ENCODE measurements at regions of chr5 and their contacts with region 1.

Region 1: DNA sequence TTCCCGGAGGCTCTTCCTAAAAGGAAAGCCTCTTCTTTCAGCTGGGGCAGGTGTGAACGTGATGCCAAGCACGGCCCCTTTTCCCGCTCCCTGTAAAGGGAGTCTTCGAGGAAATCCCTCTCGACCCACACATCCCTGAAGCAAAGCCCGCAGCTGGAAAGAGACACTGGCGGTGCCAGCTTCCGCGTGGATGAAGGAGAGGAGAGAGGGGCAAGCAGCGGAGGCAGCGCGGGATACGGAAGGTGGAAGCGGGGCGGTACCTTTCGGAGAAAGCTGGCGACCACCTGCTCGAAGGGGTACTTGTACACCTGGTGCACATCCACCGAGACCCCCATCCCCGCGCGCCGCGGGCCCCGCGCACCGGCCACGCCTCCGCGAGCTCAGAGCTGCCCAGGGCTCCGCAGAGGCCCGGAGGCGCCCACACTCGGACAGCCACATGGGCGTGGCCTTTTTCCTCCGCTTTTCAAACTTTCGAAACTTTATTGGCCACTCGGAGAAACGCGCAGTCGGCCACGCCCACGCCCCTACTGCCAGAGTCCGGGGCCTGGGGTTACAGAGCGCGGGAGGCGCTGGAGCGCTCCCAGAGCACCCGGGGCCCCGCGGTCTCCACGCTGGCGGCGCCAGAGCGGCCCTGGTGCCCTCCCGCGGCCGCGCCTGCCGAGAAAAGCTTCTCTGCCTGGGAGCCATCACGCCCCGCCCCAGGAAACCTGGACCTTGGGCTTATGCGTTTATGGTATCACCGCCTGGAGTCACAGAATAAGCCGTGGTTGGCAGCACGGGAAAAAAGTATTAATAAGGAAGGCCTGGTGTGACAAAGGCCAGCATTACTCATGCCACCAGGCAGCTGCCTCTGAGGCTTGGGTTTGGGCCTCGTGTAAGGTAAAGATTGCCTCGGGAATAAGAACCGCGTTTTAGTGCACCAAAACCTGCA is at the start of gene PRELID2:
- DNase-seq: peak; percentile 89
- ATAC-seq: peak; percentile 98
- H3K4me3 ChIP-seq: peak within 1 kb of the TSS; percentile 72 to 77 (median 74)
- H3K27ac ChIP-seq: peak within 1 kb of the TSS; percentile 79
- H3K4me1 ChIP-seq: peaks cover 67% of the 10 kb centered on the region
- H3K27me3 ChIP-seq: no peaks in the 10 kb centered on the region; a peak in 1 of 5 replicates
- CTCF ChIP-seq: peak; percentile 65
- EP300 ChIP-seq: no peak
- POLR2A ChIP-seq: peak; percentile 74 to 89
- RAD21 ChIP-seq: peak; percentile 77
- total RNA-seq, gene PRELID2: 20.3 and 22.9 TPM in 2 replicates

Region 2: GRCh38 chr5:145797336-145797735 is 37.8 kb before region 1 on chr5:
- CTCF ChIA-PET with region 1: no interaction called
- POLR2A ChIA-PET with region 1: no interaction called
- in situ Hi-C with region 1: no loop called
- intact Hi-C with region 1: no loop called
- DNase-seq: no peak
- ATAC-seq: no peak; the same call in 2 of the 3 replicates
- H3K4me3 ChIP-seq: no peak overlapping the region
- H3K27ac ChIP-seq: no peak overlapping the region
- H3K4me1 ChIP-seq: no peaks in the 10 kb centered on the region
- H3K27me3 ChIP-seq: no peaks in the 10 kb centered on the region
- CTCF ChIP-seq: no peak
- EP300 ChIP-seq: no peak
- POLR2A ChIP-seq: no peak
- RAD21 ChIP-seq: no peak

Region 3: GRCh38 chr5:145856285-145856818 is 21.2 kb after region 1 on chr5:
- CTCF ChIA-PET with region 1: no interaction called
- POLR2A ChIA-PET with region 1: interaction called, 17 read pairs
- in situ Hi-C with region 1: no loop called
- intact Hi-C with region 1: loop called (anchors 1 kb)
- DNase-seq: peak; percentile 30
- ATAC-seq: peak; percentile 88
- H3K4me3 ChIP-seq: peak overlapping the region; percentile 49 to 71 (median 57); a peak in 5 of 6 replicates
- H3K27ac ChIP-seq: peak overlapping the region; percentile 30
- H3K4me1 ChIP-seq: peaks cover 49% of the 10 kb centered on the region
- H3K27me3 ChIP-seq: no peaks in the 10 kb centered on the region
- CTCF ChIP-seq: no peak
- EP300 ChIP-seq: no peak
- POLR2A ChIP-seq: no peak
- RAD21 ChIP-seq: no peak

Region 4: DNA sequence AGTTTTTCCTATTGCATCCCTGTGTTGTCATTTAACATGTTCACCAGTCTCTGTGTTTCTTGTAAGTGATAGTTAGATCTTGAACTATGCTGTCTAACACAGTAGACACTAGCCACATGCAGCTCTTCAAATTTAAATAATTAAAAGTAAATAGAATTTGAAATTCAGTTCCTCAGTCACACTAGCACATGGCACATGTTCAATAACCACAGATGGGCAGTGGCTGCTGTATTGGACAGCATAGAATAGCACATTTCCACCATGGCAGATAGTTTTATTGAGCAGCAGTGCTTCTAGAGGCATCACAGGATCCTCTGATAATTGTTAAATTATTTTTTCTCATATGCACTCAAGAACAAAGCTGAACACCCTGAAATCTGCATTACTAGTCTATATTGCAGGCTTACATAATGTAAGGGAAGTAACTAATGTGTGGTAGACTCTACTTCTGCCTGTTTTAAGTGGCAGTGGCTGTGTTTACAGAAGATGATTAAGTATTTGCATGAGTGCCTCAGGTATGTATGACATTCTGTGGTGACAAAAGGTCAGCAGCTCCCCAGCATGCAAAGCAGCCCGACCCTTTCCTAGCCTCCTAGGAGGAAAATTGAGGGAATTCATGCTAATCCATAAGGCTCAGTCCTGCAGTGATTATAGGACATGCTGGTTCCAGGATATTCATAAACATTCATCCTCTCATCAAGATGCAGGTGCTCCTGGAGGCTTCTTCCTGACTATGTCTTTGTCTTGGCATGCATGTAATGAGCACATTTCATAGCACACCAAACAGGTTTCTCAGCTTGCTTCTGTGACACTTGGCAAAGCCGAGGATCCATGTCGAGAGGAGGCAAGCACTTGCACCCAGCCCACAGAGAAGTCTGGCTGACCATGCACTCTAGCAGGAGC is 146.7 kb after region 1 on chr5:
- CTCF ChIA-PET with region 1: no interaction called
- POLR2A ChIA-PET with region 1: interaction called, 7 read pairs
- in situ Hi-C with region 1: no loop called
- intact Hi-C with region 1: loop called (anchors 2 kb)
- DNase-seq: peak; percentile 79
- ATAC-seq: peak; percentile 39
- H3K4me3 ChIP-seq: no peak overlapping the region; a peak in 1 of 6 replicates
- H3K27ac ChIP-seq: peak overlapping the region; percentile 24
- H3K4me1 ChIP-seq: peaks cover 72% of the 10 kb centered on the region
- H3K27me3 ChIP-seq: no peaks in the 10 kb centered on the region
- CTCF ChIP-seq: no peak
- EP300 ChIP-seq: peak in 1 of 2 experiments; percentile 83; a peak in 2 of 4 replicates
- POLR2A ChIP-seq: no peak
- RAD21 ChIP-seq: no peak

Region 5: DNA sequence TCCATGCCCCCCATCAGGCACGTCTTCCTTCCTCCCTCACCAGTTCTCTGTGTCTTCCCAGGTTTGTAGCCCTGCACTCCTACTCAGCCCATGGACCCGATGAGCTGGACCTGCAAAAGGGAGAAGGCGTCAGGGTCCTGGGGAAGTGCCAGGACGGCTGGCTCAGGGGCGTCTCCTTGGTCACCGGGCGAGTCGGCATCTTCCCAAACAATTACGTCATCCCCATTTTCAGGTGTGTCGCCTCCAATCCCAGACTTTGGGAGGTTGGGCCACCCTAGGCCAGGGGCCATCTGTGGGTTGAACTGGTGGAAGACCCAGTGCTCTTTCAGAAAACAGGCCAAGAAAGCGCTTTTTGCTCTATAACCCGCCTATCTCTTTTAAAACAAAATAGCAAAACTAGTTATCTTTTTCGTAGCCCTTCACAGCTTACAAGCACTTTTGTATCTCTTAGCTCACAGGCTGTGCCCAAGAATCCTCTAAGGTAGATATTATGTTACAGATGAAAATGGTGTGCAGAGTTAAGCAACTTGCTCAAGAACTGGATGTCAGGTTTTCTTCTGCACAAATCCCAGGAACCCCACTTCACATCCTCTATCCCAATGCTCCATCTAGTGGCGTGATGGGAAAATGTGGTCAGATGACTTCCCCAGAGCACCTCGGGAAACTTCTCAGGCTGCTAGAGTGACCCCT is 214.0 kb after region 1 on chr5:
- CTCF ChIA-PET with region 1: no interaction called
- POLR2A ChIA-PET with region 1: no interaction called
- in situ Hi-C with region 1: loop called (anchors 10 kb)
- intact Hi-C with region 1: loop called (anchors 2 kb)
- DNase-seq: peak; percentile 66
- ATAC-seq: peak; percentile 92
- H3K4me3 ChIP-seq: no peak overlapping the region
- H3K27ac ChIP-seq: no peak overlapping the region
- H3K4me1 ChIP-seq: no peaks in the 10 kb centered on the region
- H3K27me3 ChIP-seq: no peaks in the 10 kb centered on the region
- CTCF ChIP-seq: peak; percentile 83
- EP300 ChIP-seq: no peak
- POLR2A ChIP-seq: no peak
- RAD21 ChIP-seq: peak; percentile 84

Region 6: GRCh38 chr5:146079695-146080361 is 244.6 kb after region 1 on chr5:
- CTCF ChIA-PET with region 1: no interaction called
- POLR2A ChIA-PET with region 1: no interaction called
- in situ Hi-C with region 1: no loop called
- intact Hi-C with region 1: no loop called
- DNase-seq: no peak
- ATAC-seq: no peak
- H3K4me3 ChIP-seq: no peak overlapping the region
- H3K27ac ChIP-seq: no peak overlapping the region
- H3K4me1 ChIP-seq: peaks cover 9% of the 10 kb centered on the region
- H3K27me3 ChIP-seq: no peaks in the 10 kb centered on the region
- CTCF ChIP-seq: no peak
- EP300 ChIP-seq: no peak
- POLR2A ChIP-seq: no peak
- RAD21 ChIP-seq: no peak

Region 7: GRCh38 chr5:146173597-146173996 is 338.4 kb after region 1 on chr5:
- CTCF ChIA-PET with region 1: no interaction called
- POLR2A ChIA-PET with region 1: no interaction called
- in situ Hi-C with region 1: no loop called
- intact Hi-C with region 1: no loop called
- DNase-seq: no peak
- ATAC-seq: no peak
- H3K4me3 ChIP-seq: no peak overlapping the region
- H3K27ac ChIP-seq: no peak overlapping the region
- H3K4me1 ChIP-seq: peaks cover 23% of the 10 kb centered on the region
- H3K27me3 ChIP-seq: no peaks in the 10 kb centered on the region
- CTCF ChIP-seq: no peak
- EP300 ChIP-seq: no peak
- POLR2A ChIP-seq: no peak
- RAD21 ChIP-seq: no peak

Measured in HepG2 (cell line).